OCI-LY7 (cell line): ENCODE measurements at regions of chr17 and their contacts with region 1.

Region 1: GRCh38 chr17:61862975-61863800 is at the start of gene BRIP1:
- DNase-seq: peak; percentile 96
- H3K4me3 ChIP-seq: peak within 1 kb of the TSS; percentile 87
- H3K27ac ChIP-seq: peak within 1 kb of the TSS; percentile 80
- H3K4me1 ChIP-seq: peaks cover 29% of the 10 kb centered on the region
- CTCF ChIP-seq: no peak
- total RNA-seq, gene BRIP1: 33.8 and 53.0 TPM in 2 replicates

Region 2: DNA sequence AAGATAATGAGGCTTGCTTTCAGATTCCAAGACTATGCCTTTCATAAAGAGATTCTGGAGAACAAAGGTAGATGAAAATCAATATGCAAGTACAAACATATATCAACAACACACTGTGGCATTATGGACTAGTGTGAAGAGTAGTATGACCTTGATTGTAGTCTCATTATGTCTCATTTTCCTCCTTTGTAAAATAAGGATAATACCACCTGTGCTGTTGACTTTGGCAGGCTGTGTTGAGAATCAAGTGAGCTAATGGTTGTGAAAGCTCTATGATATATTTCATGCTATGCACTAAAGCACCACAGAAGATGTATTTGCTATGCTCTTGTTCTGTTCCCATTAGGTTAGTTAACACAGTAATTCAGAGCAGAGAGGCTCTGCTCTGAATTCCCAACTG is 193.7 kb before region 1 on chr17:
- CTCF ChIA-PET with region 1: no interaction called
- POLR2A ChIA-PET with region 1: no interaction called
- intact Hi-C with region 1: no loop called
- DNase-seq: no peak
- H3K4me3 ChIP-seq: no peak overlapping the region
- H3K27ac ChIP-seq: no peak overlapping the region
- H3K4me1 ChIP-seq: no peaks in the 10 kb centered on the region
- CTCF ChIP-seq: no peak

Region 3: GRCh38 chr17:61837175-61838051 is 25.8 kb before region 1 on chr17:
- CTCF ChIA-PET with region 1: no interaction called
- POLR2A ChIA-PET with region 1: interaction called, 10 read pairs
- intact Hi-C with region 1: no loop called
- DNase-seq: peak; percentile 76
- H3K4me3 ChIP-seq: no peak overlapping the region
- H3K27ac ChIP-seq: no peak overlapping the region
- H3K4me1 ChIP-seq: no peaks in the 10 kb centered on the region
- CTCF ChIP-seq: peak; percentile 94

Region 4: GRCh38 chr17:61927200-61928165 is 64.3 kb after region 1 on chr17 and contains the start of gene INTS2:
- CTCF ChIA-PET with region 1: no interaction called
- POLR2A ChIA-PET with region 1: interaction called, 7 read pairs
- intact Hi-C with region 1: loop called (anchors 1 kb)
- DNase-seq: peak; percentile 93
- H3K4me3 ChIP-seq: peak within 1 kb of the TSS; percentile 75
- H3K27ac ChIP-seq: peak within 1 kb of the TSS; percentile 61
- H3K4me1 ChIP-seq: peaks cover 20% of the 10 kb centered on the region
- CTCF ChIP-seq: 0 out of 2 replicates have a peak, but pooled peaks have one; percentile 16
- total RNA-seq, gene INTS2: 15.8 and 17.9 TPM in 2 replicates